Astrocyte of the cerebellum (primary cell): ENCODE measurements at regions of chr2 and their contacts with region 1.

Region 1: DNA sequence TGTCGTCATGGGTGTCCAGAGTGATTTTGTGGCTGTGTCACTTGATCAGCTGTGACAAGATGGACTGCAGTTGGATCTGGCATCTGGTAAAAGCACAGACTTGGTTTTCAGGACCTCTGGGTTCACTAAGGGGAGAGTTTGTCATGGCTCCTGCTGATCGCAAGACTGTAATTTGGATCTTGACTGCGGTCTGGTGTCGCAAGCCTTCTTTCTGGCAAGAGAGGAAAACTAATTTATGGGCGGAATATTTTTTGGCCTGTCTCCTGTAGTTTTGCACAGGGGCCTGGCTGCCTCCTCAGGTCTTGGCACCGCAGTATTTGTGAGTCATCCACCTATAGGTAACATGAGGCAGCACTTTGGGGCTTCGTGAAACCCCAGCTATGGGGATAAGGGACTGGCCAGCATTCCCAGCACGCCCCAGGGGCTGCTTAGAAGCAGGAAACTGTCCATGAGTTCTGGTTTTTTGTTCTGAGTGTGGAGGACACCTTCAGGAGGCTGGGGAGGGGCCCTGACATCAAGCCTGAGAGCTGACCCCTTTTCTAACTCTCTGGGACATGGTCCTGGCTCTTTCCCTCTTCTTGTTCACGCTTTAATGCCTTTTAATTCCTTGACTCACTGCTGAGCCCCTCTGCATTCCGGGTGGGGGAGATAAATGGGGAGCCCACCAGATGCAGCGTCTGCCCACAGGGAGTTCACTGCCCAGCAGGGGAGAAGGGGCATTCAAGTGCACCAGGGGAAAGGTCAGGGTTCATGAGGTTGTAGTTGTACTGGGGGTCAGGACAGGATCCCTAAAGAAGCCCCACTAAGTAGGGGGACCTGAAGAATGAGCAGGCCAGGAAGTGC is 12.2 kb downstream of the SH3BP4 start:
- DNase-seq: peak; percentile 95
- H3K4me3 ChIP-seq: peak overlapping the region; percentile 5
- CTCF ChIP-seq: no peak

Region 2: GRCh38 chr2:235098736-235099494 is 134.9 kb after region 1 on chr2:
- in situ Hi-C with region 1: loop called (anchors 10 kb)
- DNase-seq: peak; percentile 55
- H3K4me3 ChIP-seq: no peak overlapping the region
- CTCF ChIP-seq: no peak